Heart left ventricle (tissue), 16 donors: ENCODE measurements at regions of chr17 and their contacts with region 1.

Region 1: DNA sequence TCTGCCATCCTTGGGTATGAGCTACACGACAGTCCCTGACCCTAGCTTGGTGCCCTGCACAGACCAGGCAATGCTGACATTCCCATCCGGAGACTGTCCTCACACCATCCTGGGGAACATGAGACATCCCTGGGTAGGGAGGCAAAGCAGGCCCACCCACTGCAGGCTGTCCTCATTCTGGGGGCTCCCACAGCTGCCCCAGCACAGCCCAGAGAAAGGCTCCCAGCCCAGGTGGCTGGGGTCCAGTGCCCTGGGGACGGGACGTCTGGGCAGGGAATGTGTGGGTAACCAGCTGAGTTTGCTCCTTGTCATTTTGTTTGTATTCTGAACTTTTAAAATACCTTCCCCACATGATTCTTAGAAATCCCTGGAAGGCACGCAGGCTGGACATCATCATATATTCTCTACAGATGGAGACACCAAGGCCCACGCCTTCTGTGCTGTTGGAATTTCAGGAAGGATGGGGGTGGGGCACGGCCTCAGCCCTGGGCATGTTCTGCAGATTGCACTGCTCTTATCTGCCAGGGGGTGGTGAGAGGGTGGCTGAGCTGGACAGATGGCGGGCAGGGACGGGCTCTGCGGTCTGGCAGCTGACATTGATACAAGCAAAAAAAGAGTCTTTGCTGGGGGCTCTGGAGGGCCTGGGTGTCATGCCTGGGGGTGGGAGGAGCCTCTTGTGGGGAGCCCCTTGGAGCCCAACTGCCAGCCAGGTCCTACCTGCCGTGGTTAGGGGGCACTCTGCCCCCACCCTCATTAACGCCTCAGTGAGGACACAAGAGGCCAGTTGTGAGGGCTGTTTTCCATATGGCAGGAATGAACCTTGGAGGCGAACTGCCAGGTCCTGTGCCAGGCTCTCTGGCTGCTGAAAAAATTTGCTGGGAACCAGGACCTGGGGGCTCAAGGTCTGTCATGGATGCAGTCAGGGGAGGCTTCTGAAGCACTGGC is 28.4 kb downstream of the LRRC75A start:
- DNase-seq: peak in 4 of 5 donors; percentile 60 to 73 (median 64)
- ATAC-seq: peak; percentile 80 to 87 (median 84)
- H3K4me3 ChIP-seq: no peak overlapping the region
- H3K27ac ChIP-seq: peak overlapping the region in 4 of 12 donors; percentile 13 to 60 (median 44)
- H3K4me1 ChIP-seq: peaks cover 0 to 55% (median 19%) of the 10 kb centered on the region in 12 donors
- H3K27me3 ChIP-seq: no peaks in the 10 kb centered on the region
- CTCF ChIP-seq: peak in 7 of 12 donors; percentile 11 to 44 (median 17)
- POLR2A ChIP-seq: no peak

Region 2: GRCh38 chr17:16491703-16492612 is 28.3 kb after region 1 on chr17 and contains the start of gene LRRC75A:
- intact Hi-C with region 1: loop called in 1 of 10 experiments (anchors 2 kb)
- DNase-seq: peak; percentile 47 to 75 (median 54)
- ATAC-seq: peak in 3 of 4 donors; percentile 73 to 86 (median 85)
- H3K4me3 ChIP-seq: peak within 1 kb of the TSS; percentile 27 to 86 (median 60)
- H3K27ac ChIP-seq: peak within 1 kb of the TSS in 3 of 12 donors; percentile 40 to 75 (median 51)
- H3K4me1 ChIP-seq: peaks cover 0 to 24% (median 12%) of the 10 kb centered on the region in 12 donors
- H3K27me3 ChIP-seq: peaks cover 0 to 10% (median 0%) of the 10 kb centered on the region in 9 donors
- CTCF ChIP-seq: peak in 5 of 12 donors; percentile 3 to 41 (median 21)
- POLR2A ChIP-seq: no peak
- total RNA-seq, gene LRRC75A: 0.37 to 2.5 (median 0.98) TPM

Region 3: GRCh38 chr17:16511593-16511992 is 48.0 kb after region 1 on chr17:
- intact Hi-C with region 1: loop called in 1 of 10 experiments (anchors 2 kb)
- DNase-seq: no peak
- ATAC-seq: no peak
- H3K4me3 ChIP-seq: no peak overlapping the region
- H3K27ac ChIP-seq: no peak overlapping the region
- H3K4me1 ChIP-seq: peaks cover 0 to 14% (median 4%) of the 10 kb centered on the region in 12 donors
- H3K27me3 ChIP-seq: no peaks in the 10 kb centered on the region
- CTCF ChIP-seq: no peak
- POLR2A ChIP-seq: no peak